GM23248 (cell line): ENCODE measurements at regions of chr17 and their contacts with region 1.

Region 1: GRCh38 chr17:21098934-21099689 is 27.7 kb upstream of the DHRS7B start:
- DNase-seq: peak; percentile 91
- H3K4me3 ChIP-seq: peak overlapping the region; percentile 83
- H3K27ac ChIP-seq: no peak overlapping the region
- H3K4me1 ChIP-seq: no peaks in the 10 kb centered on the region
- H3K27me3 ChIP-seq: no peaks in the 10 kb centered on the region

Region 2: GRCh38 chr17:20133517-20133916 is 965.6 kb before region 1 on chr17:
- in situ Hi-C with region 1: no loop called
- DNase-seq: no peak
- H3K4me3 ChIP-seq: no peak overlapping the region
- H3K27ac ChIP-seq: no peak overlapping the region
- H3K4me1 ChIP-seq: peaks cover under 1% of the 10 kb centered on the region; the same call in 1 of the 2 replicates
- H3K27me3 ChIP-seq: peaks cover 34% of the 10 kb centered on the region

Region 3: GRCh38 chr17:21194703-21195102 is 95.6 kb after region 1 on chr17:
- in situ Hi-C with region 1: loop called (anchors 25 kb)
- DNase-seq: peak; percentile 42
- H3K4me3 ChIP-seq: no peak overlapping the region
- H3K27ac ChIP-seq: no peak overlapping the region
- H3K4me1 ChIP-seq: peaks cover 2% of the 10 kb centered on the region
- H3K27me3 ChIP-seq: no peaks in the 10 kb centered on the region